Uterus (tissue), 4 donors: ENCODE measurements at regions of chr2 and their contacts with region 1.

Region 1: GRCh38 chr2:12320991-12321641 is 395.6 kb upstream of the TRIB2 start:
- DNase-seq: peak; percentile 78 to 86
- H3K4me3 ChIP-seq: no peak overlapping the region
- H3K27ac ChIP-seq: peak overlapping the region; percentile 78 to 88
- H3K4me1 ChIP-seq: no peaks in the 10 kb centered on the region
- H3K27me3 ChIP-seq: no peaks in the 10 kb centered on the region
- CTCF ChIP-seq: peak in 1 of 4 experiments; percentile 29
- POLR2A ChIP-seq: no peak

Region 2: DNA sequence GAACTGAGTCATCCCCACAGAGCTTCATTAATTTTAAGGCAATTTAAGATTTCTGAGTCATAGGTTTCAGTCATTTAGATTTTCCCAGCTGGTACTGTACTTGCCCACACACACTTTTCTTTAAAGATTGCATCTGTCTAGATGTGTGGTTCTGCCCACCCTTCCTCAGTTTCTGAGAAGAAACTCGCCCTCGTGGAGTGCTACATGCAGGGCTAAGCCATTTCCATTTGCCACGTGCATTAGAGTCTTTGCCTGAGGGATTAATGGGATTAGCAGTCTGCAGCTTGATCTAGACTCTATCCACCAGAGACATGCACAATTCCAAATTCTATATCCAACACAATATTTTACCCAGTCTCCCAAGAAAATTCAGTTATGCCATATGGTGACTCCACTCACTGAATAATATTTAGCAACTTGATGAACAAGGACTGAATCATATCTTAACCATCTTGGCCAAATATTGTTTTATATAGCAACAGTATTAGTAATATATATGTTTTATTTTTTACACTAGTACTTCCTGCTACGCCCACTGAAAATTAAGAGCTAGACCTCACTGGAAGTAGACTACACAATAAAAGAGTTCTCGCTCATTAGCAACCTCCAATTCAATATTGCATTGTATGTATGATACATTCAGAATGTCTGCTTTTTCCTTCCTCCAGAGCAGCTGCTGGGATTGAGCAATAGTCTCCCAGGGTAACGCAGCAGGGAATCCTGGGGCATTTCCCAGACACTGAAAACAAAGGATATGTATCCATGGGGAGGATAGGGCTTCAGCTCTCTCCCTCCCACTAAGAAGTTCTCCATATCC is 381.4 kb after region 1 on chr2:
- intact Hi-C with region 1: loop called (anchors 10 kb)
- DNase-seq: peak; percentile 46 to 53
- H3K4me3 ChIP-seq: no peak overlapping the region
- H3K27ac ChIP-seq: peak overlapping the region in 1 of 2 donors; percentile 36
- H3K4me1 ChIP-seq: peaks cover 0 to 3% of the 10 kb centered on the region in 2 donors
- H3K27me3 ChIP-seq: no peaks in the 10 kb centered on the region
- CTCF ChIP-seq: no peak
- POLR2A ChIP-seq: no peak